CD8-positive, alpha-beta T cell (primary cell): ENCODE measurements at regions of chr4 and their contacts with region 1.

Region 1: GRCh38 chr4:165190591-165191347 is 16.6 kb upstream of the KLHL2 start:
- DNase-seq: no peak
- ATAC-seq: no peak
- H3K4me3 ChIP-seq: no peak overlapping the region
- H3K4me3 Mint-ChIP-seq: no peak overlapping the region
- H3K27ac ChIP-seq: no peak overlapping the region
- H3K27ac Mint-ChIP-seq: no peak overlapping the region
- H3K4me1 ChIP-seq: no peaks in the 10 kb centered on the region
- H3K4me1 Mint-ChIP-seq: peaks cover 6% of the 10 kb centered on the region
- H3K27me3 ChIP-seq: no peaks in the 10 kb centered on the region
- H3K27me3 Mint-ChIP-seq: no peaks in the 10 kb centered on the region
- CTCF ChIP-seq: no peak

Region 2: GRCh38 chr4:165138843-165139242 is 51.9 kb before region 1 on chr4:
- CTCF ChIA-PET with region 1: no interaction called
- POLR2A ChIA-PET with region 1: no interaction called
- intact Hi-C with region 1: loop called in 1 of 2 experiments (anchors 1 kb)
- DNase-seq: no peak
- ATAC-seq: no peak
- H3K4me3 ChIP-seq: no peak overlapping the region
- H3K4me3 Mint-ChIP-seq: no peak overlapping the region
- H3K27ac ChIP-seq: no peak overlapping the region
- H3K27ac Mint-ChIP-seq: no peak overlapping the region
- H3K4me1 ChIP-seq: no peaks in the 10 kb centered on the region
- H3K4me1 Mint-ChIP-seq: no peaks in the 10 kb centered on the region
- H3K27me3 ChIP-seq: peaks cover 0 to 2% of the 10 kb centered on the region in 2 experiments
- H3K27me3 Mint-ChIP-seq: peaks cover 7% of the 10 kb centered on the region
- CTCF ChIP-seq: no peak